Activated T-helper 1 cell treated with anti-CD3 and anti-CD28 coated beads, Interleukin-12 subunit alpha, Interleukin-12 subunit beta, Interleukin-2, Interleukin-4 antibody, amounts not matched to agents 30 ng/mL and 10 ng/mL and 1 ng/mL, durations not matched to agents 14 hours and 24 hours and 36 hours (primary cell): ENCODE measurements at regions of chr3 and their contacts with region 1.

Region 1: DNA sequence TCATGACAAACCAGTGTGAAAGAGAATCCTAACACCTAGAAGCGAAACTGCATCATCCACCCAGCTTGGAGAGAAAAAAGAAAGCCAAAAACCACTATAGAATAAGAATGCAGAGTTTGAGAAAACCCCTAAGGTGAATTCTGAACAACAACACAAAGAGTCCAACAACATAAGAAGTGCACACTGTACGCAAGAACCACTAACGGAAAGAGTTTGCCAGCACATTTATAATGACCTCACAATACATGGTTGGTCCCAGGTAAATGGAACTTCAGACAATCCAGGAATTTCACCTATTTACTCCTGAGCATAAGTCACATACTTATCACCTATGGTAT is 128.3 kb upstream of the BHLHE40 start:
- DNase-seq: peak; percentile 56
- H3K4me3 Mint-ChIP-seq: peak overlapping the region; percentile 67
- H3K27ac Mint-ChIP-seq: peak overlapping the region; percentile 99
- H3K4me1 Mint-ChIP-seq: peaks cover 85% of the 10 kb centered on the region
- H3K27me3 Mint-ChIP-seq: no peaks in the 10 kb centered on the region

Region 2: DNA sequence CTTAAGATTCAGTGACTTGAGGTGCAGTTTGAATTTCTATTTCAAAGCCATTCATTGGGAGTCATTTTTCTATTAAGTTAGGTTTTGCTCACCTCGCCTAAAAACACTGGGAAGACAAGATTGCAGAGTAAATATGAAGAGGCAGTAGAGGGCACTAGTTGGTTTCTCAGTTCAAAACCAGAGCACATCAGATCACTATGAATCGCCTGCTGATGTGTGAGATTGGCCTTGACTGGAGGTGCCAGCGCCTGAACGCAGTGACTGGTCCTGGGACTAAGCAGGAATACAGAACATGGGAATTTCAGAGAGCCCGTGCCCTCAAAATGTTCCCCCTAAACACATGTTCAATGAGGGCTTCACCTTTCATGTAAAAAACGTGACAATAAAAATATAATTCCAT is 128.8 kb before region 1 on chr3:
- intact Hi-C with region 1: loop called (anchors 2 kb)
- DNase-seq: no peak
- H3K4me3 Mint-ChIP-seq: no peak overlapping the region
- H3K27ac Mint-ChIP-seq: peak overlapping the region; percentile 90
- H3K4me1 Mint-ChIP-seq: peaks cover 78% of the 10 kb centered on the region
- H3K27me3 Mint-ChIP-seq: no peaks in the 10 kb centered on the region

Region 3: DNA sequence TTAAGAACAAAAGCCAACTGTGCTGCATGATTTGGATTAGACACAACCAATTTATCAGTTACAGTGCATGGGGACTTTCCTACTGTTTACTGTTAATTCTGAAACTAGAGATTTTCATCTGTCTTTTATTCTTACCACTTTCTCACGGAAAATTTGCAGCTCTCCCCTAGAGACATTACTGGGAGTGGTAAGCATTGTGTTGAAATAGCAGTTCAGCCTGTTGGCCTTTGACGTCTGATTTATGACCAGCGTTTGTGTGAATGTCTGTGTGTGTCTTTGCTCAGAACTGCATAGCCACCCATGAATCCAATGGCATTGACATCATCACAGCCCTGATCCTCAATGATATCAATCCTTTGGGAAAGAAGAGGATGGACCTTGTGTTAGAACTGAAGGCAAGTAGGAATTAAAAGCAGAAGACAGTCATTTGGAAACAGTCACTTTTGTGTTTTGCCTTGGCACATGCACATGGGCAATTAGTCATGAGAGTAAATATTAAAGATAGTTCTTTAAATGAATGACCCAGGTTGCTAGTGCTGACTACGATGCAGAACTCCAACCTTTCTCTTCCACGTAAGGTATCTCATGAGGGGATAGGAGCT is 73.8 kb before region 1 on chr3:
- intact Hi-C with region 1: loop called (anchors 1 kb)
- DNase-seq: peak; percentile 32
- H3K4me3 Mint-ChIP-seq: peak overlapping the region; percentile 73
- H3K27ac Mint-ChIP-seq: peak overlapping the region; percentile 98
- H3K4me1 Mint-ChIP-seq: peaks cover 82% of the 10 kb centered on the region
- H3K27me3 Mint-ChIP-seq: no peaks in the 10 kb centered on the region

Region 4: DNA sequence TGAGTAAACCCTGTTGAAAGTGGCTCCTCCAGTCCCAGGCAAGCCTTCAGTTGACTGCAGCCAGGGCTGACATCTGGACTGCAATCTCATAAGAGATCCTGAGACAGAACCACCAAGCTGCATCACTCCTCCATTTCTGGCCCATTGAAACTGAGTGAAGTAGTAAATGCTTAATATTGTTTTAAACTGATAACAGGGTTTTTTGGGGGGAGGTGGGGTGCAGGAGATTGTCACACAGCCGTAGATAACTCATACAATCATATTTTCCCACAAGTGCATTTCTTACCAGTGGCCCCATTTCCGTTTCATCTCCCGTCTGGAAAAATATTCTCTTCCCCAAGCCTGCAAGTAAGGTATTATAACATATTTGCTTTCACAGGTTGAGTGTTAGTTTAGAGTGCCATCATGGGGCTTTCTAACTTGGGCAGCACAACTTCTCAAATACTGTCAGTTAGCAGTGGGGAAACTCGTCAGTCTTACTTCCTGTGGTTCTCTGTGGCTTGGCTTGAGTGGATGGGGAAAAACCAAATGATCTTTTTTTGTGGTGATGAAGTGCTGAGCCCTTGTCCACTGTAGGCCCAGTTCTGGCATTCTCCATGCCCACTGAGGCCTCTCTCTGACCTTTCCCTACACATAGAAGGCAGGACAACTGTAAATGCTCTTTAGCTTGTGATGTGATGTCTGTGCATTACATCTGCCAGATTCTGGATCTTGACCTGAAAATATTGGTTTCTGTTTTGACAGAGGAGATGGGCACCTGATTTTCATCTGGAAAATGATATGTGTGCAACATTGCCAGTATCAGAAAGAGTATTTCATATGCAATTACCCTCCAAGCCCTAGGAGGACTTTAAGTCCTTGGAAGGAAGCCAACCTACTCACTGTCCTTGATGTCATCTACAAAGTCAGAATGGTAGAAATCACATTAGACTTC is 38.3 kb after region 1 on chr3:
- intact Hi-C with region 1: loop called (anchors 1 kb)
- DNase-seq: peak; percentile 50
- H3K4me3 Mint-ChIP-seq: peak overlapping the region; percentile 58
- H3K27ac Mint-ChIP-seq: peak overlapping the region; percentile 88
- H3K4me1 Mint-ChIP-seq: peaks cover 59% of the 10 kb centered on the region
- H3K27me3 Mint-ChIP-seq: no peaks in the 10 kb centered on the region

Region 5: GRCh38 chr3:4928277-4928789 is 77.4 kb after region 1 on chr3:
- intact Hi-C with region 1: loop called (anchors 1 kb)
- DNase-seq: no peak
- H3K4me3 Mint-ChIP-seq: peak overlapping the region; percentile 20
- H3K27ac Mint-ChIP-seq: peak overlapping the region; percentile 79
- H3K4me1 Mint-ChIP-seq: peaks cover 60% of the 10 kb centered on the region
- H3K27me3 Mint-ChIP-seq: no peaks in the 10 kb centered on the region

Region 6: GRCh38 chr3:5057857-5058324 is 207.0 kb after region 1 on chr3:
- intact Hi-C with region 1: loop called (anchors 1 kb)
- DNase-seq: peak; percentile 69
- H3K4me3 Mint-ChIP-seq: peak overlapping the region; percentile 23
- H3K27ac Mint-ChIP-seq: peak overlapping the region; percentile 53
- H3K4me1 Mint-ChIP-seq: peaks cover 52% of the 10 kb centered on the region
- H3K27me3 Mint-ChIP-seq: no peaks in the 10 kb centered on the region

Region 7: DNA sequence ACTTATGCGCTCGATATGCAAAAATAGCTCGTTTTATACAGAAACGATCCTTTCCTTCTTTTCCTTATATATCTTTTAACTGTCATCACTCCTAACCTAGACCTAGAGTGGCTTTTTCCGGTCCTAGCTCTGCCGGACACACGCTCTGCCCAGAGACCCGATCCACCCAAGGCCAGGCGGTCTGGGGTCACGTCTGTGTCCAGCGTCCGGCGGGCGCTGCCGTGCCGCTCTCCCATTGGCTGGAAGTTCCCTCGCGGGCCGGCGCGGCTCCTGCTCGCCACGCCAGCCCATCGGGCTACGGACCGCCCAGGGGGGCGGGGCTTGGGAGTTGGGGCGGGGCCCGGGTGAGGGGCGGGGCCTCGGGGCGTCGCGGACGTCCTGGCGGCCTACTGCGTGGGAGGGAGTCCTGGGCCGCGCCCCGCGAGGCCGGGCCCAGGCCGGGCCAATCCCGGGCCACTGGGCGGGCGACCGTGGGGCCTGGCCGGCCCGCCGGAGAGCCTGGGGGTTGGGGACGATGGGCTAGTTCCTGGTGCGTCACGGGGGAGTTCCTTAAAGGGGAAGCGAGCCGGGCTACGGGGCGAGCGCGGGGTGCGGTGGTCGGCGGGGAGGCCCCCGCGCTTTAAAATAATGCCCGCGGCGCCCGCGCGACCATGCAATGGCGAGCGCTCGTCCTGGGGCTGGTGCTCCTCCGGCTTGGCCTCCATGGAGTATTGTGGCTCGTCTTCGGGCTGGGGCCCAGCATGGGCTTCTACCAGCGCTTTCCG is 336.4 kb after region 1 on chr3 and contains the start of gene EDEM1:
- intact Hi-C with region 1: loop called (anchors 2 kb)
- DNase-seq: peak; percentile 96
- H3K4me3 Mint-ChIP-seq: peak within 1 kb of the TSS; percentile 93
- H3K27ac Mint-ChIP-seq: peak within 1 kb of the TSS; percentile 98
- H3K4me1 Mint-ChIP-seq: peaks cover 39% of the 10 kb centered on the region
- H3K27me3 Mint-ChIP-seq: no peaks in the 10 kb centered on the region
- total RNA-seq, gene EDEM1: 169 and 192 TPM in 2 replicates